ENCODE measurements at regions of chr11 and their contacts with region 1.

Region 1: GRCh38 chr11:71977743-71978418 is 20.8 kb upstream of the IL18BP start:
- DNase-seq: peak; percentile 74
- ATAC-seq: peak; percentile 70
- H3K4me3 Mint-ChIP-seq: no peak overlapping the region
- H3K27ac Mint-ChIP-seq: no peak overlapping the region
- H3K4me1 Mint-ChIP-seq: no peaks in the 10 kb centered on the region
- H3K27me3 Mint-ChIP-seq: no peaks in the 10 kb centered on the region

Region 2: GRCh38 chr11:71937826-71938225 is 40.1 kb before region 1 on chr11:
- CTCF ChIA-PET with region 1: no interaction called
- POLR2A ChIA-PET with region 1: no interaction called
- DNase-seq: no peak
- ATAC-seq: no peak
- H3K4me3 Mint-ChIP-seq: no peak overlapping the region
- H3K27ac Mint-ChIP-seq: no peak overlapping the region
- H3K4me1 Mint-ChIP-seq: peaks cover 9% of the 10 kb centered on the region
- H3K27me3 Mint-ChIP-seq: no peaks in the 10 kb centered on the region

Region 3: GRCh38 chr11:71962428-71963038 is 15.3 kb before region 1 on chr11:
- CTCF ChIA-PET with region 1: interaction called, 14 read pairs
- POLR2A ChIA-PET with region 1: no interaction called
- DNase-seq: no peak
- ATAC-seq: no peak
- H3K4me3 Mint-ChIP-seq: no peak overlapping the region
- H3K27ac Mint-ChIP-seq: no peak overlapping the region
- H3K4me1 Mint-ChIP-seq: peaks cover 7% of the 10 kb centered on the region
- H3K27me3 Mint-ChIP-seq: no peaks in the 10 kb centered on the region

Region 4: GRCh38 chr11:71991494-71991893 is 13.6 kb after region 1 on chr11:
- CTCF ChIA-PET with region 1: interaction called, 33 read pairs
- POLR2A ChIA-PET with region 1: no interaction called
- DNase-seq: no peak
- ATAC-seq: no peak
- H3K4me3 Mint-ChIP-seq: no peak overlapping the region
- H3K27ac Mint-ChIP-seq: no peak overlapping the region
- H3K4me1 Mint-ChIP-seq: peaks cover 3% of the 10 kb centered on the region
- H3K27me3 Mint-ChIP-seq: no peaks in the 10 kb centered on the region

Region 5: GRCh38 chr11:71998662-71999310 is 20.9 kb after region 1 on chr11 and contains the start of gene IL18BP:
- CTCF ChIA-PET with region 1: interaction called, 23 read pairs
- POLR2A ChIA-PET with region 1: interaction called, 3 read pairs
- DNase-seq: peak; percentile 67
- ATAC-seq: peak; percentile 83
- H3K4me3 Mint-ChIP-seq: peak within 1 kb of the TSS; percentile 82
- H3K27ac Mint-ChIP-seq: peak within 1 kb of the TSS; percentile 97
- H3K4me1 Mint-ChIP-seq: peaks cover 22% of the 10 kb centered on the region
- H3K27me3 Mint-ChIP-seq: no peaks in the 10 kb centered on the region
- total RNA-seq, gene IL18BP: 15.9 to 16.2 TPM

Region 6: DNA sequence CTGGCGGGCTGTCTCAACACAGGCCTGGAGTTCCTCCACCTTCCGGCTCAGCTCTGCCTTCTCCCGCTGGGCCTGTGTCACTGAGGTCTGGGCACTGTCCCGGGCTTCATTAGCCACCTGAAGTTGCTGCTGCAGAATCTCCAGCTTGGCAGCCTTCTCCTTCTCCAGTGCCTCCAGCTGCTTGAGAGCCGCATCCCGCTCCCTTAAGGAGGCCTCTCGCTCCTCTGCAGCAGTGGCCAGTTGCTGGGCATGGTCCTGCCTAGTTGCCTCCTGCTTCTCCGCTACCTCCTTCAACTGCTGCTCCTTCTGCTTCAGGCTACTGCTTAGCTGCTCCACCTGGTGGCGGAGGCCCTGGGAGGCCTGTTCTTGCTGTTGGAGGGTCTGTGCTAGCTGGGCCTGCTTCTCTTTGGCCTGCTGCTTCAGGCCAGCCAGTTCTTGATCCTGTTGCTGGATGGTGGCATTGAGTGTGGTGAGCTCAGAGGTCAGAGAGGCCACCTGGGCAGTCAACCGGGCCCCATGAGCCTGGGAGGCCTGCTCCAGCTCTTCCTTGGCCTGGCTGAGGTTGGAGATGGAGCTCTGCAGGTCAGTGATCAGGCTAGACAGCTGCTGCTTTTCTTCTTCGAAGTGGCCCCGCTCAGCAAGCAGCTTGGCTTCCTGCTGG is 37.8 kb after region 1 on chr11:
- CTCF ChIA-PET with region 1: interaction called, 27 read pairs
- POLR2A ChIA-PET with region 1: no interaction called
- DNase-seq: peak; percentile 32
- ATAC-seq: no peak
- H3K4me3 Mint-ChIP-seq: no peak overlapping the region
- H3K27ac Mint-ChIP-seq: peak overlapping the region; percentile 46
- H3K4me1 Mint-ChIP-seq: no peaks in the 10 kb centered on the region
- H3K27me3 Mint-ChIP-seq: no peaks in the 10 kb centered on the region

Region 7: DNA sequence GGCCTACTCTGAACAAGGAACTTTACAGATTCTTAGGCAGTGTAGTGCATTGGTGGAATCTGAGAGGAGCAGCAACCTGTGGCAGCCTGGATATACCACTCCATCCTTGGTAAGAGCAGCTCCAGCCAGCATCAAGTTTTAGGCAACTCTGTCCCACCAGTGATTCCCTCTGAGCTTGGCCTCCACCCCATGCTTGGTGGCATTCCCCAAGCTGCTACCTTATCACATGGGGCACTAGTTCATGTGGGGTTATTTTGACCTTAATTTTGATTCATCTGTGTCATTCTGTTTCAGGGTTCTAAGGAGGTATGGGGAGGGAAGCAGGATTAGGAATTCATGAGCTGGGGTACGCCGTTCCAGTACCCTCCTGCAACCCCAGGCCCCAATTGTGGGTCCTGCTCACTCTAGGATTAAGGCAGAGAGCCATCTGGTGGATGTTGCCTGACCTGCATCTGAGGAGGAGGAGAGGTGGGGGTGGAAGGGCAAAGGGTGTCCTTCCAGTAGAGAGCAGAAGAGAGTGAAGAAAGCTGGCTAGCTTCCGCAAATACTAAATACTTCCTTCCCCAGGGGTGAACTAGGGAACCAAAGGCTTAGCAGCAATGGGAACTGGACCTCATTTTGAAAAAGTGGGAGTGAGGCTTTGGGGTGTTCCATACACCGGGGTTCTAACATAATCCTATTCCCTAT is 113.3 kb after region 1 on chr11:
- CTCF ChIA-PET with region 1: interaction called, 34 read pairs
- POLR2A ChIA-PET with region 1: no interaction called
- DNase-seq: peak; percentile 76
- ATAC-seq: peak; percentile 87
- H3K4me3 Mint-ChIP-seq: no peak overlapping the region
- H3K27ac Mint-ChIP-seq: peak overlapping the region; percentile 43
- H3K4me1 Mint-ChIP-seq: peaks cover 4% of the 10 kb centered on the region
- H3K27me3 Mint-ChIP-seq: no peaks in the 10 kb centered on the region

Region 8: DNA sequence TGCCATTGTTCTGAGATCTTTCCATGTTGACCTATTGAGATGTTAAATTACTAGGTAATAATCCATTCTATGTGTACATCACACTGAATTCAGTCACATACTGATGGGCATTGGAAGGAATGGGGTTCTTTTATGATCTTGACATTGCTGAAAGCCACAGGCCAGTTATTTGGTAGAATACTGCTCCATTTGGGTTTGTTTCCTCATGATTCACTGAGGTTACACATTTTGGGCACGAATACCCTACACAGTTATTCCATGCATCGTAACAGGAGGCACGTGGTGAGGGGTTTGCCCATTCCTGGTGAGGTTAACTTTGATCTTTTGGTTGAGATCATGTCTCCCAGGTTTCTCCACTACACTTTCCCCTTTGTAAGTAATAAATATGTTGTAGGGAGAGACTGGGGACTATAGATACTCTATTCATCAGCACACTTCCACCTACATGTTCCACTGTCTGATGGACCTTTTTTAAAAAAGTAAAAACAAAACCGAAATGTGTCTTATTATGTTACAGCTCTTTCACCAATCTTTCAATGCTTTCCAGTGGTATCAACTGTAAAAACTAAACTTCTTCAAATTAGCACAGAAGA is 202.0 kb after region 1 on chr11:
- CTCF ChIA-PET with region 1: interaction called, 19 read pairs
- POLR2A ChIA-PET with region 1: no interaction called
- DNase-seq: no peak
- ATAC-seq: no peak
- H3K4me3 Mint-ChIP-seq: no peak overlapping the region
- H3K27ac Mint-ChIP-seq: no peak overlapping the region
- H3K4me1 Mint-ChIP-seq: peaks cover 2% of the 10 kb centered on the region
- H3K27me3 Mint-ChIP-seq: peaks cover 20% of the 10 kb centered on the region